Left lung (tissue), 14 donors: ENCODE measurements at regions of chr11 and their contacts with region 1.

Region 1: GRCh38 chr11:75388386-75389275 is 10.7 kb upstream of the RPS3 start:
- DNase-seq: peak in 3 of 4 donors; percentile 53 to 84 (median 73)
- ATAC-seq: peak; percentile 85
- H3K4me3 ChIP-seq: no peak overlapping the region
- H3K27ac ChIP-seq: no peak overlapping the region
- H3K4me1 ChIP-seq: peaks cover 10 to 21% of the 10 kb centered on the region in 2 donors
- H3K27me3 ChIP-seq: no peaks in the 10 kb centered on the region
- CTCF ChIP-seq: peak; percentile 71 to 82

Region 2: GRCh38 chr11:75280227-75280701 is 108.4 kb before region 1 on chr11:
- intact Hi-C with region 1: loop called (anchors 2 to 10 kb)
- DNase-seq: peak in 3 of 4 donors; percentile 71 to 83 (median 75)
- ATAC-seq: peak; percentile 90
- H3K4me3 ChIP-seq: no peak overlapping the region
- H3K27ac ChIP-seq: peak overlapping the region in 1 of 2 donors; percentile 43
- H3K4me1 ChIP-seq: peaks cover 0 to 26% of the 10 kb centered on the region in 2 donors
- H3K27me3 ChIP-seq: no peaks in the 10 kb centered on the region
- CTCF ChIP-seq: peak; percentile 92 to 99

Region 3: GRCh38 chr11:75328426-75329277 is 60.0 kb before region 1 on chr11:
- intact Hi-C with region 1: loop called in 1 of 2 experiments (anchors 2 kb)
- DNase-seq: peak in 2 of 4 donors; percentile 85 to 89
- ATAC-seq: peak; percentile 92
- H3K4me3 ChIP-seq: no peak overlapping the region
- H3K27ac ChIP-seq: peak overlapping the region; percentile 69 to 70
- H3K4me1 ChIP-seq: peaks cover 32 to 84% of the 10 kb centered on the region in 2 donors
- H3K27me3 ChIP-seq: no peaks in the 10 kb centered on the region
- CTCF ChIP-seq: peak; percentile 60 to 61